CD4-positive, alpha-beta memory T cell (primary cell): ENCODE measurements at regions of chr21 and their contacts with region 1.

Region 1: DNA sequence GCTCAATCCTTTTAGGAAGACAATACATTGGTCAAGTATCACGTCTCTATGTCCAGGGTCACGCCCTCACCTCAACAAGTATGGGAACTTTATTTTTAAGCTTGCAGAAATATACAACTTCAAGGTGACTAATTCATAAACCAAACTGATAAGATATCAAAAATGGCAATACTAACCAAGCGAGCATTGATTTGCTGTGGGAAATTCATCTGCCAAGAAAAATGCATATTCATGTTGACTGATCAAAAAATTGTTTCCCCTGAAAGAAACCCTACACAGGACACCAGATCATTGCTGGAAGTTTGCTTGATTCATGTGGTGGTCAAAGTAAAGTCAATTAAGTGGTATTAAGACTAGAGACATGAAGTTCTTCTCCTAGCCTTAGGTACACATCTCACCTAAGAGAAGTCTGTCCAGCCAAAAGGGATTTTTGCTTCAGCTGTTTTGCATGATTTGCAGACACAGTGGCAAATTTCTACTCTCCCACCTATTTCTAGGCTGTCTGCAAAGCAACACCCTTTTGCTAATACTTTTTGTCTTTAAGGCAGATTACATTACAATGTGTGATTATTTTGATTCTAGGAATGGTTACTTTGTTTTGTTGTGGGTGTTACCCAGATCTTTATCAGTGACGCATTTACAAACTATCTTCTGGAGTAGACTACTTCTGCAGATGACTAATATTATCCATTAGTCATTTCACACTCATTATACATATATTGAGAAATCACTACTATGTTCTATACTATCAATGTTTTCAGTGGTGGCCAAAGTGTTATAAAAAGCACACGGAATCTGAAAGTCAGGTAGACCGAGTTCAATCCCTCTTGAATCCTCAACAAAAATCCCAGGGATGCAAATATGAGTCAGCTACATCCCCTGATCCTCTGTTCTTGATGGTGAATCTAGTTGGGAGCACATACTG is 12.3 kb downstream of the SAMSN1 start:
- DNase-seq: peak; percentile 78 to 87 (median 83)
- H3K4me3 ChIP-seq: peak overlapping the region; percentile 33 to 48
- H3K4me3 Mint-ChIP-seq: peak overlapping the region; percentile 84 to 96 (median 90)
- H3K27ac ChIP-seq: peak overlapping the region; percentile 87
- H3K27ac Mint-ChIP-seq: peak overlapping the region; percentile 97 to 100 (median 98)
- H3K4me1 ChIP-seq: peaks cover 60% of the 10 kb centered on the region
- H3K4me1 Mint-ChIP-seq: peaks cover 50 to 77% (median 59%) of the 10 kb centered on the region in 4 donors
- H3K27me3 ChIP-seq: no peaks in the 10 kb centered on the region
- H3K27me3 Mint-ChIP-seq: peaks cover 0 to 1% of the 10 kb centered on the region in 2 donors

Region 2: DNA sequence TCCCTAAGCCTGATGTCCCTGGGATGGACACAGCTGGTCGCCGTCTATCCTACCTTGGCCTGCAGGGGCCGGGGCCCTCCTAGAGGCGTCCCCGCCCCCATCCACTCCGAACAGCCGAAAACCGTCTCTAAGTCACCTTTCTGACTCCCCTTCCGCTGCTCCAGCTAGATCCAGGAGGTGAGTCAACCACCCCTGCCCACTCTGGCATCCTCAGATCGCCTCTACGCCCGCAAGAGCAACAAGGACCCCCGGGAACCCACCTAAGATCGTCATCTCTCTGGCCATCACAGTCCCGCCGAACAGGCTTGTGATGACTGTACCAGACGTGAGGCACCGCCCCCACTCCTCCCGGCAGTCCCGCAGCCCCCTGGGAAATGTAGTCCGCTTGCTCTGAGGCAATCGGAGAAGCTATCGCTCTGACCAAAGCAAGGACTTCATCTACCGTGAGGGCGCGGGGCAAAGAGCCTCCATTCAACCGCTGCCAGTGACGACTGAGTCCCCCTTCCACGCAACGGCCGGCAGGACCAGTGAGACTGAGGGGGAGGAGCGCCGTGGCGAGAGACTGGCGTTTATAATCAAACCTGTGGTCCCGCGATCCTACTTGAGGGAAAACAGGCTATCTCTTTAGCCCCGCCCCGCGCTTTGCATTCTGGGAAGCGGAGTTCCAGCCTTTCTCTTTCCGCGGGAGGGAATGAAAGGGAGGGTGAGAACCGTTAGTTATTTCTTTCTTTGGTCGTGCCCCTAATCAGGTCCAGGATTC is 150.8 kb before region 1 on chr21 and contains the start of gene HSPA13:
- CTCF ChIA-PET with region 1: no interaction called
- POLR2A ChIA-PET with region 1: no interaction called
- intact Hi-C with region 1: loop called (anchors 1 kb)
- DNase-seq: peak; percentile 98 to 100 (median 99)
- H3K4me3 ChIP-seq: peak within 1 kb of the TSS; percentile 77 to 80
- H3K4me3 Mint-ChIP-seq: peak within 1 kb of the TSS; percentile 98 to 100 (median 100)
- H3K27ac ChIP-seq: peak within 1 kb of the TSS; percentile 84
- H3K27ac Mint-ChIP-seq: peak within 1 kb of the TSS; percentile 99 to 100 (median 100)
- H3K4me1 ChIP-seq: peaks cover 35% of the 10 kb centered on the region
- H3K4me1 Mint-ChIP-seq: peaks cover 16 to 51% (median 32%) of the 10 kb centered on the region in 4 donors
- H3K27me3 ChIP-seq: no peaks in the 10 kb centered on the region
- H3K27me3 Mint-ChIP-seq: no peaks in the 10 kb centered on the region
- total RNA-seq, gene HSPA13: 32.0 to 38.5 TPM

Region 3: DNA sequence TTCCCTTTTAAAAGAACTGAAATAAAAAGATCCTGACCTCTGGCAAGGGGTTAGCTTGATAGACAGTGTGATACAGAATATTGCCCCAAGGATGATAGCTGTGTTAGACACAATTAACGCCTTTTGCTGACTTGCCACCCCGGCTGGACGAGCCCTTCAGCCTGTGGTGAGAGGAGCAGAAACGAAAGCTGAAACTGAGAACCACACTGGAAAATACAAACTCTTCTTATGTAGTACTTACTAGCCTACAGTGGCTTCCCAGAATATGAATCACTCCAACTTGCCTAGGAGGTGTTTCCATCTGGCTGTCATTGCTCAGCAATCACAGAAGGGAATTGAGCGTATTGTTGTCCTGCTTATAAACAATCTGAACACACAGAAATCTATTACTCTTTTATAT is 10.5 kb before region 1 on chr21:
- CTCF ChIA-PET with region 1: interaction called, 3 read pairs
- POLR2A ChIA-PET with region 1: interaction called, 17 read pairs
- intact Hi-C with region 1: no loop called
- DNase-seq: peak in 2 of 5 donors; percentile 24 to 51
- H3K4me3 ChIP-seq: no peak overlapping the region
- H3K4me3 Mint-ChIP-seq: peak overlapping the region; percentile 16 to 92 (median 80)
- H3K27ac ChIP-seq: no peak overlapping the region
- H3K27ac Mint-ChIP-seq: peak overlapping the region; percentile 31 to 92 (median 77)
- H3K4me1 ChIP-seq: peaks cover 76% of the 10 kb centered on the region
- H3K4me1 Mint-ChIP-seq: peaks cover 46 to 70% (median 57%) of the 10 kb centered on the region in 4 donors
- H3K27me3 ChIP-seq: no peaks in the 10 kb centered on the region
- H3K27me3 Mint-ChIP-seq: no peaks in the 10 kb centered on the region

Region 4: GRCh38 chr21:14581902-14582457 is 48.2 kb after region 1 on chr21:
- CTCF ChIA-PET with region 1: no interaction called
- POLR2A ChIA-PET with region 1: no interaction called
- intact Hi-C with region 1: loop called (anchors 5 kb)
- DNase-seq: peak; percentile 42 to 61 (median 49)
- H3K4me3 ChIP-seq: no peak overlapping the region
- H3K4me3 Mint-ChIP-seq: peak overlapping the region; percentile 56 to 82 (median 75)
- H3K27ac ChIP-seq: no peak overlapping the region
- H3K27ac Mint-ChIP-seq: peak overlapping the region; percentile 51 to 91 (median 77)
- H3K4me1 ChIP-seq: peaks cover 11% of the 10 kb centered on the region
- H3K4me1 Mint-ChIP-seq: peaks cover 18 to 25% (median 24%) of the 10 kb centered on the region in 4 donors
- H3K27me3 ChIP-seq: no peaks in the 10 kb centered on the region
- H3K27me3 Mint-ChIP-seq: no peaks in the 10 kb centered on the region

Region 5: DNA sequence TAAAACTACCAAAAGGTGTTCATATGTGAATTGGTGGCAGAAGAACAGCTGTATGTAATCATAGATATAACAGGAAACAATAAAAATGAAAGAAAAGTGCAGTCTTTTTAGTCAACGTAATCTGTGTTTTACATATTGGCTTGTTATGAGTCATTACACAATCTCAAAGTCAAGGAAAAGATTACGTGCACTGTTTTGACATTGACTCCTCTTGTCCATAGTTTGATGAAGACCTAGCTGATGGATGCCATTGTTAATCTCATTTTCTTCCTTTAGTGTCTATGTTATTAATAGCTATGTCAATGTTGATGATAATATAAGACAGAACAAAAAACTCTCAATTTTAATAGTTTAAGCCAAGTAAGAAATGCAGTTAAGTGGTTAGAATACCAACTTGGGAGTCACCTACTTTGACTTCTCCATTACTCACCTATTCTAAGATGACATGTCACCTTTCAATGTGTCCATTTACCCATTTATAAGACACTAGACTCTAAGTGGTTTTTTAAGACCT is 96.8 kb after region 1 on chr21:
- CTCF ChIA-PET with region 1: interaction called, 3 read pairs
- POLR2A ChIA-PET with region 1: no interaction called
- intact Hi-C with region 1: loop called (anchors 1 kb)
- DNase-seq: peak in 4 of 5 donors; percentile 23 to 41 (median 28)
- H3K4me3 ChIP-seq: no peak overlapping the region
- H3K4me3 Mint-ChIP-seq: peak overlapping the region; percentile 64 to 84 (median 78)
- H3K27ac ChIP-seq: no peak overlapping the region
- H3K27ac Mint-ChIP-seq: peak overlapping the region; percentile 58 to 92 (median 77)
- H3K4me1 ChIP-seq: peaks cover 21% of the 10 kb centered on the region
- H3K4me1 Mint-ChIP-seq: peaks cover 18 to 25% (median 20%) of the 10 kb centered on the region in 4 donors
- H3K27me3 ChIP-seq: no peaks in the 10 kb centered on the region
- H3K27me3 Mint-ChIP-seq: no peaks in the 10 kb centered on the region